ENCODE measurements at regions of chr4 and their contacts with region 1.

Region 1: DNA sequence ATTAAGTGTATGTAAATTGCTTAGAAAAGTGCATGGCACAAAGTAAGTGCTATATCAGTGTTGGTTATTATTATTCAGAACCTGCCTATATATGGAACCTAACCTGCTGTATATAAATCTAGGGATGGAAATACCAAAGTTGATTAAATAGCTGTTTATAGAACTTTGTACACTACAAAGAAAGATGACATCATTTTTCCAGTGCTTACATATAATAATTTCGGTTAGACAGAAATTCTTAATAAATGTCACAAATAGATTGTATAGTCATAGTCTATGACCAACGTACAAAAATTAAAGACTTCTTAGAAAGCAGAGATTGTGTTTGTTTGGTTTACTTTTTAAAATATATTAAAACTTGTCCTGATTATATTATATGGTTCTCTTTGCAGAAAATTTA is 4.4 kb downstream of the GYPB start:
- DNase-seq: no peak
- ATAC-seq: no peak
- H3K4me3 ChIP-seq: no peak overlapping the region
- H3K4me3 Mint-ChIP-seq: no peak overlapping the region
- H3K27ac ChIP-seq: no peak overlapping the region
- H3K27ac Mint-ChIP-seq: no peak overlapping the region
- H3K4me1 ChIP-seq: no peaks in the 10 kb centered on the region
- H3K4me1 Mint-ChIP-seq: no peaks in the 10 kb centered on the region
- H3K27me3 ChIP-seq: no peaks in the 10 kb centered on the region
- H3K27me3 Mint-ChIP-seq: peaks cover 0 to 9% (median 0%) of the 10 kb centered on the region in 5 donors

Region 2: DNA sequence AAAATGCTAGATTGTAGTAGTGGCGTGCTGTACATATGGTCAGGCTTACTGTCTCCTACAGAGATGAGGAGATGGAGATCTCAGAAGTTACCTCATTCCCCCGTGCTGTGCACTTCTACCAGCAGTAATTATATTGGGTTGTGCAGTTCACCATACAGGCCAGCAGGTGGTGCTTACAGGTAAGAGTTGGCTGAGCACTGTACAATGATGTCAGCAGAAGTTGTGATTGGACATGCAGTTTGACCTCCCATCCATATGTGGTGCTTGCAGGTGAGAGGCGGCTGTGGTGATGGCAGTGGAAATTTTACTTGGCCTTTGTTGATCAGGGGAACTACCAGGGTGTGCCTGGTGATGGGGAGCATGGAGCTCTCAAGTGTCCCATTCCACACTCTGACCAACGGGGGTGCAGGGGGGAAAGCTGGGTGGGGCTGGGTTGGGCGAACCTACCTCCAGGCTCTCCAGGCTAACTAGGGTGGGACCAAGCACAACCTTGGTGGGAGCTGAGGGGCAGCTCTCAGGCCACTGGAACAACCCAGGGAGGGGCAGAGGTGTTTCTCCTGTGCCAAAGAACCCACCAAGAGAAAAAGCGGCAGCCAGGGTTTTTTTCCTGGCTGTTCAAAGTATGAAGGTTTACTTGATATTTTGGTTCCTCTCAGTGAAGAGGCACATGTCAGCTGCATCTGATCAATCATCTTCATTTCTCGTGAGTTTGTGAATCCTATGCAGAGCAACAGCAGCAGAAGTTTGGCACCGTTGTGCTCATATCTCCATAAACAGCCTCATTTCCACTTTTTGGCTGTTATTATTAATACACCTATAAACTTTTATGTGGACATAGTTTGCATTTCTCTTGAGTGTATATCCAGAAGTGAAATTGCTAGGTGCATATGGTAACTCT is 240.6 kb before region 1 on chr4:
- CTCF ChIA-PET with region 1: no interaction called
- POLR2A ChIA-PET with region 1: no interaction called
- intact Hi-C with region 1: loop called in 1 of 2 experiments (anchors 10 kb)
- DNase-seq: peak in 5 of 9 donors; percentile 16 to 37 (median 22)
- ATAC-seq: peak; percentile 75
- H3K4me3 ChIP-seq: no peak overlapping the region
- H3K4me3 Mint-ChIP-seq: no peak overlapping the region
- H3K27ac ChIP-seq: no peak overlapping the region
- H3K27ac Mint-ChIP-seq: no peak overlapping the region
- H3K4me1 ChIP-seq: no peaks in the 10 kb centered on the region
- H3K4me1 Mint-ChIP-seq: peaks cover 0 to 3% (median 0%) of the 10 kb centered on the region in 7 donors
- H3K27me3 ChIP-seq: no peaks in the 10 kb centered on the region
- H3K27me3 Mint-ChIP-seq: peaks cover 0 to 12% (median 0%) of the 10 kb centered on the region in 5 donors

Region 3: DNA sequence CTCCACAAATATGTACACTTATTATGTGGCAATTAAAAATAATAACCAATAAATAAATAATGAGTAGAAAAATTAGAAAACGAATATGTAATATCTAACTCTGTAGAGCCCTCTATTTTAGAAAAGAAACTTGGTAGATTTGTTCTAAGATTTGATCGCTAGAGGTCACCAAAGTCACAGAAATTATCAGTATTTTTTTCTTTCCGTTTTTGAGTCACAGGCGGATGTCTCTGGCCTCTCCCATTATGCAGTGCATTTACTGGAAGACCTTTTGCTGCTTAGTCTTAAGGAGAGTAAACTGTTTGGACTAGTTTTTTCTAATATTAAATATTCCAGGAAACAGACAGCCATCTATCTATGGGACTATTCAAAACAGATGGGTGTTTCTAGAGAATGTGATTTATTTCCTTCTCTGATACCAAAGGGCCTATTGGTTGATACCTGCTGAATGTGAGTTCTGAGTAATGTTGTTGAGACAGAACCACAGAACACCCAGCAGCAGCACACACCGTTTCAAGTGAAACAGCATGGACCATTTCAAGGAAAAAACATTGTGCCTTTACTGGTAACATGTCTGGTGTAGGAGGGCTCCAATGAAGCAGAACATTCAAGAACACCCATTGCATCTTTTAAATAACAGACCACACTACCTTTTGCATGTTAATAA is 159.7 kb after region 1 on chr4:
- CTCF ChIA-PET with region 1: no interaction called
- POLR2A ChIA-PET with region 1: no interaction called
- intact Hi-C with region 1: no loop called
- DNase-seq: peak in 7 of 9 donors; percentile 10 to 62 (median 45)
- ATAC-seq: peak; percentile 63
- H3K4me3 ChIP-seq: no peak overlapping the region
- H3K4me3 Mint-ChIP-seq: peak overlapping the region in 1 of 10 donors; percentile 44
- H3K27ac ChIP-seq: no peak overlapping the region
- H3K27ac Mint-ChIP-seq: peak overlapping the region in 3 of 9 donors; percentile 25 to 84 (median 41)
- H3K4me1 ChIP-seq: peaks cover 0 to 3% of the 10 kb centered on the region in 2 donors
- H3K4me1 Mint-ChIP-seq: peaks cover 0 to 29% (median 4%) of the 10 kb centered on the region in 7 donors
- H3K27me3 ChIP-seq: no peaks in the 10 kb centered on the region
- H3K27me3 Mint-ChIP-seq: peaks cover 0 to 11% (median 9%) of the 10 kb centered on the region in 5 donors

Region 4: GRCh38 chr4:144213371-144213770 is 198.6 kb after region 1 on chr4:
- CTCF ChIA-PET with region 1: no interaction called
- POLR2A ChIA-PET with region 1: no interaction called
- intact Hi-C with region 1: no loop called
- DNase-seq: no peak
- ATAC-seq: no peak
- H3K4me3 ChIP-seq: no peak overlapping the region
- H3K4me3 Mint-ChIP-seq: no peak overlapping the region
- H3K27ac ChIP-seq: no peak overlapping the region
- H3K27ac Mint-ChIP-seq: no peak overlapping the region
- H3K4me1 ChIP-seq: no peaks in the 10 kb centered on the region
- H3K4me1 Mint-ChIP-seq: no peaks in the 10 kb centered on the region
- H3K27me3 ChIP-seq: no peaks in the 10 kb centered on the region
- H3K27me3 Mint-ChIP-seq: peaks cover 0 to 23% (median 4%) of the 10 kb centered on the region in 5 donors

Region 5: DNA sequence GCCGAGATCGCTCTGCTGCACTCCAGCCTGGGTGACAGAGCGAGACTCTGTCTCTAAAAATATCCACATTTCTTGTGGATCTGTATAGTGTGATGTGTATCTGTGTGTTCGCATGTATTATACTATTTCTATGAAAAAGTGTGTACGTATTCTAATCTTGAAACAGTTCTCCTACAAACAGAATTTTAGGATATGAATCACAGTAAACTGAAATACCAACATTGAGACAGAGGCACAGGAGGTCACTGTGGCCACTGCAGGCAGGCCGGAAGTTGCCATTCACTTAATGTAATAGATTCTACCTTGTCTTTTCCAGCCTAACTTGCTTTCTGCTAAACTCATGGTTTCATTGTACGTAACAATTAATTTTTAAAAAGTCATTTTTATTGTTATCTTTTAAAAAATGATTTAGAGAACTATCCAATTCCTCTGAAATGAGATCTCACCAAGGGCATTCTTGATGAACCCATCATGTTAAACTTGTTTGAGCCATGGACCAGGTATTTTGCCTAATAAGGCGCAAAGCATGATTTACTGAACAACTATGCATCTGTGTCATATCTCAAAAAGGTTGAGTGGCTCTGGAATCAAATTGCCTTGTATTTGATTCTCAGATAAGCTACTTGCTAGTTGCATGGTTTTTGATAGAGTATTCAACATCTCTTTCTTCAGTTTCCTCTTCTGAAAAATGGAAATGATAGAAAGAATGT is 280.6 kb after region 1 on chr4:
- CTCF ChIA-PET with region 1: no interaction called
- POLR2A ChIA-PET with region 1: no interaction called
- intact Hi-C with region 1: no loop called
- DNase-seq: no peak
- ATAC-seq: no peak
- H3K4me3 ChIP-seq: no peak overlapping the region
- H3K4me3 Mint-ChIP-seq: no peak overlapping the region
- H3K27ac ChIP-seq: no peak overlapping the region
- H3K27ac Mint-ChIP-seq: no peak overlapping the region
- H3K4me1 ChIP-seq: no peaks in the 10 kb centered on the region
- H3K4me1 Mint-ChIP-seq: no peaks in the 10 kb centered on the region
- H3K27me3 ChIP-seq: no peaks in the 10 kb centered on the region
- H3K27me3 Mint-ChIP-seq: no peaks in the 10 kb centered on the region

Measured in naive thymus-derived CD4-positive, alpha-beta T cell (primary cell).